AG04449 (cell line): ENCODE measurements at regions of chr17 and their contacts with region 1.

Region 1: DNA sequence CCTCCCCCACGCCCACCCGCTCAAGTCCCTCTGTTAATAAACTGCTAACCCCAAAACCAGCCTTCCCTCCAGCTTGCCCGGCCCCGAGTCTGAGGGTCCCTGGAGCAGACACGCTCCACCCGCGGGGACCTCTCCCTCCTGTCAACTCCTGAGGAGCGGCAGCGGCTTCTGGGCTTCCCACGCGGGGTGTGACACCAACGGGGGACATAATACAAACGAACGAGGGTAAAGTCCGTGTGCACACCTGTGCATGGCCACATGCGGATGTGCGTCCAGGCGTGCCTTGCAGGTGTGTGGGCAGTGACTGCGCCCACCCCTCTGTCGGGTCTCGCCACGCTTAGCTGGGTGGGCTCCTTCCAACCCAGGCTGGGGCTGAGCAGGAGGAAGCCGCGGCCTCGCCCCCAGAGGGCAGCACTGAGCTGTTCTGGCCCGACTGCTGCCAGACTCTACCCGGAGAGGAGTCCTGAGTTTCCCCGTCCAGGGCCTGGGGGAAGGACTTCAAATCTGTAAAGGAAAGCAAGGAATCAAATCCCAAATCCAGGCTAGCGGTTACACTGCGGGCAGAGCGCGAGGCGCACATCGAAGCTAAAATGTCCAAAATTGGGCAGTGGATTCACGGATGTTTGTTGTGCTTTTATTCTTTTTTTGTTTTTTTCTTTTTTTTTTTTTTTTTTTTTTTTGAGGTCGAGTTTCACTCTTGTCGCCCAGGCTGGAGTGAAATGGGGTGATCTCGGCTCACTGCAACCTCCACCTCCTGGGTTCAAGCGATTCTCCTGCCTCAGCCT is 24.2 kb upstream of the KRT17 start:
- DNase-seq: no peak
- H3K4me3 ChIP-seq: peak overlapping the region; percentile 50
- CTCF ChIP-seq: peak; percentile 95

Region 2: GRCh38 chr17:39863244-39863917 is 1785.2 kb before region 1 on chr17:
- CTCF ChIA-PET with region 1: no interaction called
- POLR2A ChIA-PET with region 1: no interaction called
- DNase-seq: no peak
- H3K4me3 ChIP-seq: no peak overlapping the region
- CTCF ChIP-seq: no peak

Region 3: DNA sequence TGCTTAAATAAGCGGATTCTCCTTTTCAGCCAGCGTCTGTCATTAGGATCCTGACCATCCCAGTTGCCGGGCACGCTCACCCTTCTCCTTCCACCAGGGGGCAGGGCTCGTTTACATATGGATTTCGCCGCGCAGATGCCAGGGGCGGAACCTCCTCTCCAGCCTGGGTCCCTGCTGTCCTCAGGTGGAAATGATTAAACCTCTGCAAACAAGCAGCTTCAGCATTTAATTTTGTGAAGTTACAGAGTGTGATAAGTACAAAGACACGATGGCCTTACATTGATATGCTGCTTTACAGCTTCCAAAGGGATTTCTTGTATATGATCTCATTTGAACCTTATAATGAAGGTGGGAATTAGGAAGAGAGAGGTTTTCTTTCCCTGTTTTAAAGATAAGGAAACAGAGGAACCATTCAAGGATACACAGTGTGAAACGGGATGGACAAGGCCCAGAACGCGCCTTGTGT is 845.0 kb before region 1 on chr17:
- CTCF ChIA-PET with region 1: interaction called, 72 read pairs
- POLR2A ChIA-PET with region 1: no interaction called
- DNase-seq: no peak
- H3K4me3 ChIP-seq: no peak overlapping the region
- CTCF ChIP-seq: peak; percentile 92

Region 4: DNA sequence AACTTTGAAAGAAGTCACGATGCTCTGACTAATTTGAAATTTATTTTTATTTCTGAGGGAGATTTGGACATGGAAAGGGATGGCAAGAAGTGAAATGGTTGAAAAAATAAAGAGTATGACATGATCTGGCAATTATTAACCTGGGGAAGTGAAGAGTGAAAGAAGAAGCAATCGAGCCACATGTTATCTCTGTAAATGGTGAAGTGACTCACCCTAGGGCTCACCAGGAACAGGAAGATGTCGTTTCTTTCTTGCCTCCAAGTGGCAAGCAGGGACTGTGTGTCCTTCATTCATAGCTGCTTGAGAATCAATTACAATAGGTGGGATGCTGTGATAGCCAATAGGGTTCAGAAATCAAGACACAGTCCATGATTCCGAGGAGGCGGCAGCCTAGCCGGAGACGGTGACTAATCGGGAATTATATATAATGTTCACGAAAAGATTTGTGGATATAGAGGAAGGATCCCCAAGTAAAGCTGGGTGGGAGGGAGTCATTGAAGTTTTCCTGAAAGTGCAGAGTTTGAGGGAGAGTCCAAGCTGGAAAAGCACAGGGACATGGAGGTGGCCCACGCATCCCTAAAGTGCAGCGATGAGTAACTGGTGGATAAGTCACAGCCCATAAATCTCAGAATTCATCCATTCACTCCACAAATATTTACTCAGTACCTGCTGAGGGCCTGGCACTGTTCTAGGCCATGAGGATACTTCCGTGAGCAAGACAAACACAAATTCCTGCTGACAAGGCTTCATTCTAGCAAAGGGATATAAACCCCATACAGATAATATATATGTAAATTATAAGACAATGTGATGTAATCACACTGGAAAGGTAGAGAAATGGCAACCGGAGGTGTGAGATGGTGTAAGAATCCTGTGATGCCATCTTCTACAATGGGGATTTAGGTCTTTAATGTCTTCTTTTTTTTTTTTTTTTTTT is 745.2 kb before region 1 on chr17:
- CTCF ChIA-PET with region 1: interaction called, 12 read pairs
- POLR2A ChIA-PET with region 1: no interaction called
- DNase-seq: no peak
- H3K4me3 ChIP-seq: peak overlapping the region; percentile 2
- CTCF ChIP-seq: no peak

Region 5: GRCh38 chr17:41329281-41329948 is 319.2 kb before region 1 on chr17:
- CTCF ChIA-PET with region 1: interaction called, 18 read pairs
- POLR2A ChIA-PET with region 1: no interaction called
- DNase-seq: no peak
- H3K4me3 ChIP-seq: no peak overlapping the region
- CTCF ChIP-seq: peak; percentile 95

Region 6: DNA sequence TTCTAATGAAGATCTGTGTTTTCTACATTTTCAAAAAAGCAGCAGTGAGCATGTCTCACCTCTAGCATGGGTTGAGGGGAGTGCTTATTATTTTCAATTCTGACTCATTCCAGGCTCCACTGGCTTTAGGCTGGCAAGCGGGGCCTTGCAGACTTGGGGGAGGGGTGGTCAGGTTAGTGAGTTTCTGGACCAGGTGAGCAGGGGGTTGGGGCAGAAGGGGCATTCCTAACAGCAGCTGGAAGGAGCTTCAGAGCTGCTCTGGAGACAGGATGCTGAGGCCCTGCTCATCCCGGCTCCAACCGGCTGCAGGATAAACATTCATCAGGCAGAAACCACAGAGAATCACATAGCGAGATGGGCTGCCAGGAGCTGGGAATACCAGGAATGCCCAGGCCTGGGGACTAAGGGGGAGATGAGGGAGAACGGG is 110.0 kb before region 1 on chr17:
- CTCF ChIA-PET with region 1: interaction called, 25 read pairs
- POLR2A ChIA-PET with region 1: no interaction called
- DNase-seq: no peak
- H3K4me3 ChIP-seq: no peak overlapping the region
- CTCF ChIP-seq: no peak

Region 7: GRCh38 chr17:41593311-41593981 is 55.2 kb before region 1 on chr17:
- CTCF ChIA-PET with region 1: interaction called, 32 read pairs
- POLR2A ChIA-PET with region 1: no interaction called
- DNase-seq: no peak
- H3K4me3 ChIP-seq: no peak overlapping the region
- CTCF ChIP-seq: no peak

Region 8: GRCh38 chr17:41635121-41636097 is 13.2 kb before region 1 on chr17:
- CTCF ChIA-PET with region 1: interaction called, 60 read pairs
- POLR2A ChIA-PET with region 1: no interaction called
- DNase-seq: no peak
- H3K4me3 ChIP-seq: no peak overlapping the region
- CTCF ChIP-seq: no peak

Region 9: GRCh38 chr17:41777574-41778188 is 129.1 kb after region 1 on chr17:
- CTCF ChIA-PET with region 1: no interaction called
- POLR2A ChIA-PET with region 1: no interaction called
- DNase-seq: peak; percentile 47
- H3K4me3 ChIP-seq: no peak overlapping the region
- CTCF ChIP-seq: no peak

Region 10: DNA sequence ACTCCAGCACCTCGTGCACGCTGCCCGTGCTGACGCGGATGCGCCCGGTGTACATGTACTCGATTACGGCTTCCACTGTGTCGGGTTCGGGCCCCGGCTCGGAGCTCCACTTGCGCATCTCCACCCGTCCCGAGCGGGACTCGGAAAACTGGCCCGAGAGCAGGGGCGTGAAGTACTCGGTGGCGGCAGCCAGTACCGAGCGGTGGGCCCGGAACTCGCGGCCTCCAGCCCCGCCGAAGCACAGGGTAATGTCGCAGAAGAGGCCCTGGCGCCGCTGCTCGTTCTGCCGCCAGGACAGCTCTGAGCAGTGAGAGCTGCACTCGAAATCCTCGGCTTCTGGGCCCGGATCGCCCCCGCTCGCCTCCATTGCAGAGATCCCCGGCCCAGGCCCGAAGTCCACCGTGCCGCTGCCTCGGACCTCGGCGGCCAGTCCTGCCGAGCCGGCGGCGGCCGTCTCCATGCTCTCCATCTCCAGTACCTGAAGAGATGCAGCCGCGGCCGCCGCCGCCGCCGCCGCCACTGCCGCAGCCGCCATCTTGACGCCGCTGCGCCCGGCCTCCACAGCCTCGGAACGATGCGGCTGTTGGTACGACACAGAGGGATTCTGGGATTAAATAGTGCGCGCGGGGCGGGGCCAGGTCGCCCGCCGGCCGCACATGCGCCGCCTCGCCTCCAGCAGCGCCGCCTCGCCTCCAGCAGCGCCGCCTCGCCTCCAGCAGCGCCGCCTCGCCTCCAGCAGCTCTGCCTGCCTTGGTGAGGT is 216.4 kb after region 1 on chr17 and contains the start of gene KLHL11:
- CTCF ChIA-PET with region 1: no interaction called
- POLR2A ChIA-PET with region 1: no interaction called
- DNase-seq: peak; percentile 17
- H3K4me3 ChIP-seq: peak within 1 kb of the TSS; percentile 93
- CTCF ChIP-seq: no peak